Breast epithelium (tissue), 4 donors: ENCODE measurements at regions of chr9 and their contacts with region 1.

Region 1: GRCh38 chr9:72364679-72365524 is at the start of gene ZFAND5:
- DNase-seq: peak; percentile 98 to 99
- H3K4me3 ChIP-seq: peak within 1 kb of the TSS; percentile 64 to 95 (median 94)
- H3K27ac ChIP-seq: peak within 1 kb of the TSS; percentile 95 to 99
- H3K4me1 ChIP-seq: peaks cover 0 to 10% of the 10 kb centered on the region in 2 donors
- H3K27me3 ChIP-seq: no peaks in the 10 kb centered on the region
- CTCF ChIP-seq: peak in 2 of 3 donors; percentile 22 to 30
- POLR2A ChIP-seq: peak; percentile 98
- total RNA-seq, gene ZFAND5: 268 to 516 (median 423) TPM

Region 2: GRCh38 chr9:72415163-72415562 is 50.3 kb after region 1 on chr9:
- intact Hi-C with region 1: no loop called
- DNase-seq: no peak
- H3K4me3 ChIP-seq: no peak overlapping the region
- H3K27ac ChIP-seq: no peak overlapping the region
- H3K4me1 ChIP-seq: no peaks in the 10 kb centered on the region
- H3K27me3 ChIP-seq: no peaks in the 10 kb centered on the region
- CTCF ChIP-seq: no peak
- POLR2A ChIP-seq: no peak

Region 3: DNA sequence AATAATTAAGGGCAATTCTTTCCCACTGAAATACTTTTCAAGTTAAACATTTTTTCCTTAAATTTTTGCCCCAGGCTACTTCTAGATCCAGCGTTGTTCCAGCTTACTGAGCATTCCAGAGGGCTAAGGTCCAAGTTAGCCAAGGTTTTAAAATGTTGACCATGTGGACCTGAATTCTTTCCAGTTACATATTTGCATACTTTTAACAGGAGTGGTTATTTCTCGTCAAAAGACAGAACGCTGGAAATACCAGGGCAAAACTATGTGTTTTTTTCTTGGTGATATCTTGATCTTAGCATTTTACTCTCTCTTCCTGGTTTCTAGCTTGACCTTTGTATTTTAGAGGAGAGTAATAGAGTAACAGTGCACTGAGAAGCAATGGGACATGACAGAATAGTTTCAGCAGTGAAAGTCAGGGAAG is 189.3 kb after region 1 on chr9:
- intact Hi-C with region 1: loop called (anchors 5 kb)
- DNase-seq: no peak
- H3K4me3 ChIP-seq: no peak overlapping the region
- H3K27ac ChIP-seq: peak overlapping the region; percentile 29 to 52
- H3K4me1 ChIP-seq: no peaks in the 10 kb centered on the region
- H3K27me3 ChIP-seq: no peaks in the 10 kb centered on the region
- CTCF ChIP-seq: no peak
- POLR2A ChIP-seq: no peak

Region 4: GRCh38 chr9:72843520-72844439 is 478.9 kb after region 1 on chr9:
- intact Hi-C with region 1: no loop called
- DNase-seq: no peak
- H3K4me3 ChIP-seq: no peak overlapping the region
- H3K27ac ChIP-seq: no peak overlapping the region
- H3K4me1 ChIP-seq: no peaks in the 10 kb centered on the region
- H3K27me3 ChIP-seq: no peaks in the 10 kb centered on the region
- CTCF ChIP-seq: no peak
- POLR2A ChIP-seq: no peak